Natural killer cell (primary cell): ENCODE measurements at regions of chr7 and their contacts with region 1.

Region 1: DNA sequence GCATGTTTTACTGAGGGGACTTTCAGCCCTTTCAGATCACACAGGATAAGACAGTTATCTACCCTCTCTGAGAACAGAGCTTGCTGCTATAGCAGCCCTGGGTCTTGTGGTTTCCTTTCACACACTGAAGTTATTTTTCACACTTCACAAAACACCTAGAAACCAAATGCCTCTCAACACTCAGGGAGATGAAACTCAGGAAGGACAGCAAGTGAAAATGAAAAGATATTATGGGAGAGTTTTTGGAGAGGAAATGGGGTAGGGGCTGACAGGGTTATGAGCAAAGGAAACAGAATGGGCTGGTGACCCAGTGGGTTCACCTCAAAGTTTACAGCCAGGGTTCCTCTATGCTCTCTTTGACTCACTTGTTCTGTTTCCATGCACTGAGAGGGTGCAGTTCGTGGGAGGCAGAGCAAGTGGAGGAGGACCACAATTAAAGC is 17.0 kb upstream of the GIMAP2 start:
- DNase-seq: peak; percentile 53 to 89
- ATAC-seq: peak; percentile 73 to 88 (median 80)
- H3K4me3 ChIP-seq: no peak overlapping the region
- H3K4me3 Mint-ChIP-seq: peak overlapping the region; percentile 58
- H3K27ac ChIP-seq: peak overlapping the region; percentile 96
- H3K27ac Mint-ChIP-seq: peak overlapping the region; percentile 99 to 100
- H3K4me1 ChIP-seq: peaks cover 62% of the 10 kb centered on the region
- H3K4me1 Mint-ChIP-seq: peaks cover 81 to 85% of the 10 kb centered on the region in 2 donors
- H3K27me3 ChIP-seq: no peaks in the 10 kb centered on the region
- H3K27me3 Mint-ChIP-seq: no peaks in the 10 kb centered on the region
- CTCF ChIP-seq: no peak

Region 2: GRCh38 chr7:150448789-150449147 is 219.7 kb before region 1 on chr7:
- intact Hi-C with region 1: loop called (anchors 2 kb)
- DNase-seq: peak; percentile 78 to 95
- ATAC-seq: peak; percentile 69 to 76 (median 72)
- H3K4me3 ChIP-seq: no peak overlapping the region
- H3K4me3 Mint-ChIP-seq: peak overlapping the region; percentile 96
- H3K27ac ChIP-seq: peak overlapping the region; percentile 89
- H3K27ac Mint-ChIP-seq: peak overlapping the region; percentile 92 to 97
- H3K4me1 ChIP-seq: peaks cover 68% of the 10 kb centered on the region
- H3K4me1 Mint-ChIP-seq: peaks cover 53 to 65% of the 10 kb centered on the region in 2 donors
- H3K27me3 ChIP-seq: no peaks in the 10 kb centered on the region
- H3K27me3 Mint-ChIP-seq: no peaks in the 10 kb centered on the region
- CTCF ChIP-seq: peak; percentile 93

Region 3: GRCh38 chr7:150514748-150515222 is 153.7 kb before region 1 on chr7 and contains the start of gene GIMAP7:
- intact Hi-C with region 1: loop called (anchors 2 kb)
- DNase-seq: peak; percentile 46 to 83
- ATAC-seq: peak; percentile 74 to 84 (median 81)
- H3K4me3 ChIP-seq: peak within 1 kb of the TSS; percentile 83
- H3K4me3 Mint-ChIP-seq: peak within 1 kb of the TSS; percentile 100
- H3K27ac ChIP-seq: peak within 1 kb of the TSS; percentile 73
- H3K27ac Mint-ChIP-seq: peak within 1 kb of the TSS; percentile 96 to 100
- H3K4me1 ChIP-seq: peaks cover 34% of the 10 kb centered on the region
- H3K4me1 Mint-ChIP-seq: peaks cover 58 to 65% of the 10 kb centered on the region in 2 donors
- H3K27me3 ChIP-seq: no peaks in the 10 kb centered on the region
- H3K27me3 Mint-ChIP-seq: no peaks in the 10 kb centered on the region
- CTCF ChIP-seq: no peak
- total RNA-seq, gene GIMAP7: 66.3 to 100 (median 67.6) TPM

Region 4: GRCh38 chr7:150631866-150632864 is 36.3 kb before region 1 on chr7 and contains the start of gene GIMAP6:
- intact Hi-C with region 1: loop called (anchors 2 kb)
- DNase-seq: peak in 1 of 2 donors; percentile 68
- ATAC-seq: peak; percentile 66 to 76 (median 66)
- H3K4me3 ChIP-seq: peak within 1 kb of the TSS; percentile 61
- H3K4me3 Mint-ChIP-seq: peak within 1 kb of the TSS; percentile 86
- H3K27ac ChIP-seq: peak within 1 kb of the TSS; percentile 79
- H3K27ac Mint-ChIP-seq: peak within 1 kb of the TSS; percentile 72 to 93
- H3K4me1 ChIP-seq: peaks cover 52% of the 10 kb centered on the region
- H3K4me1 Mint-ChIP-seq: peaks cover 56 to 79% of the 10 kb centered on the region in 2 donors
- H3K27me3 ChIP-seq: no peaks in the 10 kb centered on the region
- H3K27me3 Mint-ChIP-seq: no peaks in the 10 kb centered on the region
- CTCF ChIP-seq: no peak
- total RNA-seq, gene GIMAP6: 39.7 to 100 (median 51.9) TPM

Region 5: GRCh38 chr7:150716368-150716767 is 47.9 kb after region 1 on chr7 and contains the start of gene GIMAP1:
- intact Hi-C with region 1: loop called (anchors 2 kb)
- DNase-seq: peak; percentile 27 to 83
- ATAC-seq: peak; percentile 73 to 79 (median 79)
- H3K4me3 ChIP-seq: peak within 1 kb of the TSS; percentile 71
- H3K4me3 Mint-ChIP-seq: peak within 1 kb of the TSS; percentile 87
- H3K27ac ChIP-seq: peak within 1 kb of the TSS; percentile 79
- H3K27ac Mint-ChIP-seq: peak within 1 kb of the TSS; percentile 92 to 93
- H3K4me1 ChIP-seq: peaks cover 46% of the 10 kb centered on the region
- H3K4me1 Mint-ChIP-seq: peaks cover 71 to 76% of the 10 kb centered on the region in 2 donors
- H3K27me3 ChIP-seq: no peaks in the 10 kb centered on the region
- H3K27me3 Mint-ChIP-seq: no peaks in the 10 kb centered on the region
- CTCF ChIP-seq: no peak
- total RNA-seq, gene GIMAP1: 11.1 to 23.9 (median 13.3) TPM

Region 6: GRCh38 chr7:150753826-150754603 is 85.5 kb after region 1 on chr7:
- intact Hi-C with region 1: loop called (anchors 1 kb)
- DNase-seq: peak in 1 of 2 donors; percentile 69
- ATAC-seq: peak in 2 of 3 donors; percentile 43 to 55
- H3K4me3 ChIP-seq: no peak overlapping the region
- H3K4me3 Mint-ChIP-seq: peak overlapping the region; percentile 62
- H3K27ac ChIP-seq: peak overlapping the region; percentile 71
- H3K27ac Mint-ChIP-seq: peak overlapping the region; percentile 87 to 89
- H3K4me1 ChIP-seq: peaks cover 39% of the 10 kb centered on the region
- H3K4me1 Mint-ChIP-seq: peaks cover 49 to 60% of the 10 kb centered on the region in 2 donors
- H3K27me3 ChIP-seq: no peaks in the 10 kb centered on the region
- H3K27me3 Mint-ChIP-seq: no peaks in the 10 kb centered on the region
- CTCF ChIP-seq: no peak